GM12878 (cell line): ENCODE measurements at regions of chr3 and their contacts with region 1.

Region 1: GRCh38 chr3:38117748-38118420 is 19.0 kb downstream of the ACAA1 start:
- DNase-seq: peak; percentile 41
- ATAC-seq: peak; percentile 92
- H3K4me3 ChIP-seq: no peak overlapping the region
- H3K27ac ChIP-seq: no peak overlapping the region
- H3K4me1 ChIP-seq: peaks cover 6% of the 10 kb centered on the region; the same call in 1 of the 2 replicates
- H3K27me3 ChIP-seq: no peaks in the 10 kb centered on the region; a peak in 1 of 4 replicates
- CTCF ChIP-seq: peak; percentile 94 to 97 (median 95)
- EP300 ChIP-seq: no peak
- POLR2A ChIP-seq: peak; percentile 39; the same call in 1 of the 2 replicates
- RAD21 ChIP-seq: peak; percentile 89

Region 2: GRCh38 chr3:38131621-38132369 is 13.9 kb after region 1 on chr3:
- CTCF ChIA-PET with region 1: interaction called, 13 read pairs
- POLR2A ChIA-PET with region 1: interaction called, 3 read pairs
- RAD21 ChIA-PET with region 1: no interaction called
- SMC1A ChIA-PET with region 1: interaction called, 6 read pairs
- in situ Hi-C with region 1: no loop called
- intact Hi-C with region 1: no loop called
- DNase-seq: no peak
- ATAC-seq: peak; percentile 60
- H3K4me3 ChIP-seq: no peak overlapping the region
- H3K27ac ChIP-seq: no peak overlapping the region
- H3K4me1 ChIP-seq: peaks cover 18% of the 10 kb centered on the region
- H3K27me3 ChIP-seq: no peaks in the 10 kb centered on the region
- CTCF ChIP-seq: peak; percentile 59 to 67 (median 61)
- EP300 ChIP-seq: no peak
- POLR2A ChIP-seq: no peak
- RAD21 ChIP-seq: peak; percentile 56

Region 3: GRCh38 chr3:38235466-38235865 is 117.6 kb after region 1 on chr3:
- CTCF ChIA-PET with region 1: interaction called, 4 read pairs
- POLR2A ChIA-PET with region 1: interaction called, 7 read pairs
- RAD21 ChIA-PET with region 1: no interaction called
- SMC1A ChIA-PET with region 1: no interaction called
- in situ Hi-C with region 1: no loop called
- intact Hi-C with region 1: loop called (anchors 5 kb)
- DNase-seq: no peak
- ATAC-seq: no peak
- H3K4me3 ChIP-seq: no peak overlapping the region
- H3K27ac ChIP-seq: no peak overlapping the region
- H3K4me1 ChIP-seq: peaks cover 12% of the 10 kb centered on the region
- H3K27me3 ChIP-seq: no peaks in the 10 kb centered on the region
- CTCF ChIP-seq: no peak
- EP300 ChIP-seq: no peak
- POLR2A ChIP-seq: no peak
- RAD21 ChIP-seq: no peak

Region 4: GRCh38 chr3:38281895-38282675 is 164.2 kb after region 1 on chr3 and contains the start of gene SLC22A14:
- CTCF ChIA-PET with region 1: interaction called, 5 read pairs
- POLR2A ChIA-PET with region 1: interaction called, 5 read pairs
- RAD21 ChIA-PET with region 1: interaction called, 3 read pairs
- SMC1A ChIA-PET with region 1: interaction called, 3 read pairs
- in situ Hi-C with region 1: no loop called
- intact Hi-C with region 1: loop called (anchors 5 kb)
- DNase-seq: no peak
- ATAC-seq: peak; percentile 60
- H3K4me3 ChIP-seq: no peak within 1 kb of the TSS
- H3K27ac ChIP-seq: no peak within 1 kb of the TSS
- H3K4me1 ChIP-seq: no peaks in the 10 kb centered on the region
- H3K27me3 ChIP-seq: no peaks in the 10 kb centered on the region; a peak in 1 of 4 replicates
- CTCF ChIP-seq: peak in 2 of 3 experiments; percentile 25 to 38; a peak in 3 of 6 replicates
- EP300 ChIP-seq: no peak
- POLR2A ChIP-seq: no peak
- RAD21 ChIP-seq: peak; percentile 25
- polyA plus RNA-seq, gene SLC22A14: not detected

Region 5: DNA sequence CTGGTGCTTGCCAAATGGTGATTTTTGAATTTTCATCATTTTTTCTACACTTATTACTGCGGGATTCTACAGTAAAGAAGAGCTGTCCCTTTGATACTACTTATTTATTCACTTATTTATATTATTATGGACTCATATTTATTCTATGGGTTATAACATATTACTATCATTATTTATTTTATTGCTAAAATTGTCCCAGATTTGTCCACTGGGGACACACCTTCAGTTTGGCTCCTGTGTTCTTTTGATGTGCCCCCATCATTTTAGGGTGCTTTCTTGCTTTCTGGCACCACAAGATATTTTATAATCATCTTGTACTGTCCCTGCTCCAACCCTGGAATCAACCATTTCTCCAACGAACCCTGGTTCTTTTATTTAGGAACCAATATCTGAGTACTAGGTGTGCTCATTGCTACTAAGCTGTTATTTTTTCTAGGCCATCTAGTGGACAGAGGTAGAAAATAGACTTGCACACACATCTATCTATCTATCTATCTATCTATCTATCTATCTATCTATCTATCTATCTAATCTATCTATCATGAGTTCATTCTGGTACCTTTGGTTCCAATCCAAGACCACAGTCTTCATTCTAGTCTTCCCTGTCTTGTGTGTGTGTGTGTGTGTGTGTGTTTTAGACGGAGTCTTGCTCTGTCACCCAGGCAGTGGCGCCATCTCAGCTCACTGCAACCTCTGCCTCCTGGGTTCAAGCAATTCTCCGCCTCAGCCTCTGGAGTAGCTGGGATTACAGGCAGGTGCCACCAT is 180.2 kb after region 1 on chr3:
- CTCF ChIA-PET with region 1: interaction called, 42 read pairs
- POLR2A ChIA-PET with region 1: no interaction called
- RAD21 ChIA-PET with region 1: interaction called, 4 read pairs
- SMC1A ChIA-PET with region 1: interaction called, 20 read pairs
- in situ Hi-C with region 1: no loop called
- intact Hi-C with region 1: loop called (anchors 5 kb)
- DNase-seq: peak; percentile 5
- ATAC-seq: peak; percentile 83
- H3K4me3 ChIP-seq: no peak overlapping the region
- H3K27ac ChIP-seq: no peak overlapping the region
- H3K4me1 ChIP-seq: no peaks in the 10 kb centered on the region
- H3K27me3 ChIP-seq: no peaks in the 10 kb centered on the region
- CTCF ChIP-seq: peak; percentile 23 to 40 (median 28); a peak in 3 of 6 replicates
- EP300 ChIP-seq: no peak
- POLR2A ChIP-seq: no peak
- RAD21 ChIP-seq: peak; percentile 35

Region 6: DNA sequence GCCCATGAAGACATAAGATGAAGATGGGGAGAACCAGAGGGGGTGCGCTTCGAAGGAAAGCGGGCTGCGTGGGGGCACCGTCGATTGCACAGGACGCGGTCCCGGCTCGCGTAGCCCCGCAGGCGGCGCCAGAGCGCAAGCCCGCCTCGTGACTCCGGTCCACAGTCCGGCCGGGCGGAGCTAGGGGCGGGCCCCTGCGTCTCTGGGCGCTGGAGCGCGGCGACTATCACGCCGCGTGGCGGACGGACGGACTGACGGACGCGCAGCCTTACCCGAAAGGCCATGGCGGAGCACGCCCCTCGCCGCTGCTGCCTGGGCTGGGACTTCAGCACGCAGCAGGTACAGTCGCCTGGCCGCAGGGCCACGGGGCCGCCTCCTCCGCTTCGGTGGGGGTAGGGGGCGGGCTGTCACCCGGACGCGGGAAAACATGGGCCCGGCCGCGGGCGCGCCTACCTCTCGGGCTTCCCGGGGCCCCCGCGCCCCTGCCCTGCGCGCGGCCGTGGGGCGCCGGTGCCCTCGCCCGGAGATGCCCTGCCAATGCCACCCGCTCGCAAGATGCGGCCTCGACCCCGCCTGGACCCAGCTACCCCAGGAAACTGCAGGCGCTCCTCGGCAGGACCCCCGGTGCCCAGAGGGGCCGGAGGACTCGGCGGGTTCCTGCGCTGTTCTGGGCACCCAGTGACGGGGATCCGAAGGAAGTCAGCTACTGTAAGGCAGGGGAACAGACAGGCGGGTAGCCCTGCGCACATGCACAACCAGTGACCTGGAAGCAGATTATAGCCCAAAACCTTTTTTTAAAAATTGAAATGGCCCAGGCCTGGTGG is 228.9 kb after region 1 on chr3 and contains the start of gene XYLB:
- CTCF ChIA-PET with region 1: interaction called, 12 read pairs
- POLR2A ChIA-PET with region 1: no interaction called
- RAD21 ChIA-PET with region 1: interaction called, 4 read pairs
- SMC1A ChIA-PET with region 1: no interaction called
- in situ Hi-C with region 1: no loop called
- intact Hi-C with region 1: loop called (anchors 5 kb)
- DNase-seq: peak; percentile 44
- ATAC-seq: peak; percentile 98
- H3K4me3 ChIP-seq: peak within 1 kb of the TSS; percentile 86
- H3K27ac ChIP-seq: peak within 1 kb of the TSS; percentile 42
- H3K4me1 ChIP-seq: no peaks in the 10 kb centered on the region; the same call in 1 of the 2 replicates
- H3K27me3 ChIP-seq: no peaks in the 10 kb centered on the region
- CTCF ChIP-seq: peak; percentile 84 to 89 (median 88)
- EP300 ChIP-seq: peak in 1 of 2 experiments; percentile 58; a peak in 1 of 4 replicates
- POLR2A ChIP-seq: peak; percentile 79
- RAD21 ChIP-seq: peak; percentile 53
- polyA plus RNA-seq, gene XYLB: 0.60 to 0.80 TPM

Region 7: DNA sequence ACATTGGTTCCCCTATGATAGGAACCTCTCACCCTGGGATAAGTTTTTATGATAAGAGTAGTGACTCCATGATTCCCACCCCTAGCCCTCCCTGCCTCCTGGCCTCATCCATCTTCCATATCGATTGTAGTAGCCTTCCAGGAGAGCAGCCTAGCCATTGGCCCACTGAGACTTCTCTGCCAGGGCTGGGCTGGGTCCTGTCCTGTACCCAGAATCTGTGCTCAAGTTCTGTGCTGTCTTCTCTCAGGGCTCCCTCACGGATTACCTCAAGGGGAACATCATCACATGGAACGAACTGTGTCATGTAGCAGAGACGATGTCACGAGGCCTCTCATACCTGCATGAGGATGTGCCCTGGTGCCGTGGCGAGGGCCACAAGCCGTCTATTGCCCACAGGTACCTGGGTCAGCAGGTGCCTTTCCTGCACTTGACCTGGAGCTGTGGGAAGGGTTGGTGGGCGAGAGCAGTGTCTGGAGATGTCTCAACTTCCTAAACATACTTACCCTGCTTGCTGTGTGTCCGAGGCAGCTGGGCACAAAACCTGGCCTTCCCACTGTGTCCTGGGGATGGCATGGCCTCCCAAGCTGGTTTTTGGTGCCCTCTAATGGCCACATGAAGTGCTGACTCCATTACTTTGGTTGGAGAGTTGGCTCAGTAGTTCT is 361.7 kb after region 1 on chr3:
- CTCF ChIA-PET with region 1: interaction called, 18 read pairs
- POLR2A ChIA-PET with region 1: no interaction called
- RAD21 ChIA-PET with region 1: interaction called, 3 read pairs
- SMC1A ChIA-PET with region 1: no interaction called
- in situ Hi-C with region 1: loop called (anchors 5 kb)
- intact Hi-C with region 1: loop called (anchors 1 kb)
- DNase-seq: no peak
- ATAC-seq: peak; percentile 97
- H3K4me3 ChIP-seq: no peak overlapping the region
- H3K27ac ChIP-seq: no peak overlapping the region
- H3K4me1 ChIP-seq: no peaks in the 10 kb centered on the region
- H3K27me3 ChIP-seq: no peaks in the 10 kb centered on the region
- CTCF ChIP-seq: peak; percentile 72 to 90 (median 89)
- EP300 ChIP-seq: no peak
- POLR2A ChIP-seq: no peak
- RAD21 ChIP-seq: peak; percentile 92